ENCODE measurements at regions of chr7 and their contacts with region 1.

Region 1: DNA sequence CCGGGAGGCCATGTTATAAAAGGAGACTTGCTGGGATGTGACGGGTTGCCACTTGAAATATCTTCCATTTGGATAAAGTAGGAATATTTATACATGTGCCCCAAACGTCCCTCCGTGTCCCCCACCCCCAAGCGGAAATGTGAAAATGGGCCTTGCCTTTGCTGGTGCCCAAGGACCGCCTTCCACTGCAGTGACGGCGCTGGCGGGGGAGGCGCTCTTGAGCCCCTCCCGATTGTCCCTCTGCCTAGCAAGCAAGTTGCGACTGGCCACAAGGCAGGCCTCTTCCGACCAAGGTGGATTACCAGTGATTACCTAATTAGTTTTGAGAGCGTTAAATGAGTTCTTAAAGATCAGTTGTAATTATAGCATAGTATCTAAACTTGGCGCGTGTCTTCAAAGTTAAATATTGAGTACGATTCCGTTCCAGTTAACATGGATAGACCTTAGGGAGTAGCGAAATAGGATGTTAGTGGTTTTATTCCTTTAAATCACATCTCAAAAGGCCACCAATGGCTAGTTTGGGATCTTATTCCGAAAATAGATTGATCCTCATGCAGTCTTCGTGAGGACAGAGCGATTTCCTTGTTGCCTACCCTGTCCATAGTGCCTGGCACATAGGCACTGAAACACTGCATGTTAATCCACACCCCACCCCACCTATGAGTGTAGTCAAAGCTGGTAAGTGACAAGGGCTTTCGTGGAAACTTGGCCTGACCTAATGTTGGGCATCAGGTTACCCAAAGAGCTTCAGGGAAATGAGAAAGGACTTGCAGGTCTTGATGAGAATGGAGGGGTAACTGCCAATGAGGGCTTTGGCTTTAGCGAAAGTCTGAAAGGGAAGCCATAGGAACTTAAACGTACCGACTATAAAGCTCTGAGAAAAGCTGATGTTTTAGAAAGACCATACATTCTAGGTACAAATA is 1.1 kb downstream of the PPIA start:
- DNase-seq: peak; percentile 91
- ATAC-seq: peak; percentile 58
- H3K4me3 Mint-ChIP-seq: peak overlapping the region; percentile 100
- H3K27ac Mint-ChIP-seq: peak overlapping the region; percentile 99
- H3K4me1 Mint-ChIP-seq: peaks cover 41% of the 10 kb centered on the region
- H3K27me3 Mint-ChIP-seq: no peaks in the 10 kb centered on the region

Region 2: DNA sequence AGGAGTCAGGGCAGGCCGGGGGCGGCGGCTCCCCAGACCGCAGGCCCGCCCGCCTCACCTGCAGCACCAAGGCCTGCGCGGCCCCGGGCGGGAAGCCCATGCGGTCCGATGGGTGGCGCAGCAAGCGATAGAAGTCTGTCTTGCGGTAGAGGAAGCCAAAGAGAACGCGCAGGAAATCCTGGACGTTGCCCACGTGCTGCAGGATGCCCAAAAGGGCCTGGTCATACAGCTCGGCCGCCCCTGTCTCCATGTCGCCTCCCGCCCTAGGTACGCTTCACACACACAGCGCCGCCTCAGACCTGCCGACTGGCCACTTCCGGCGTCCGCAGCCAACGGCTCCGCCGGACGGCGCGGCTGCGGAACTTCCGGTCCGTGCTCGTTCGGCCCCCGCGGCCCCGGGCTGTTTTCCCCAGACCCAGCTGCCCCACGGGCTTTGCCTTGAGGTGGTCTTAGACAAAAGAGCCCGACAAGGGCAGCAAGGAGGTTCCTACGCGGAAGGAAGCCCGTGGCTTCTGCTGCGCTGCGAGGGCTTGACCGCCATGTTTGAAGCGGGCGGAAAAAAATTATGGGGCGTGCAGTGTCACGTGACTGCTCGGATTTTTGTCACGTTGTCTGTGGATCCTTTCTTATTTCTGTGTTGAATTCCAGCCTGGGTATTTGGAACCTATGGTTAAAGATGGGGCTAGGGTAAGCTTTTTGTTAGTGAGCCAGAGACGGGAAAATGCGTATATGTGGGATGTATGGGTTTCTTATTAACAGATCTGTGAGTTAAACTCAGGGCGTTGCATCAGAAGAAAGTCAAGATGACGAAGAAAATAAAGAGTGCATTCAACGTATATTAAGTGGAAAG is 307.0 kb before region 1 on chr7 and contains the start of gene NUDCD3:
- CTCF ChIA-PET with region 1: no interaction called
- POLR2A ChIA-PET with region 1: no interaction called
- intact Hi-C with region 1: loop called in 1 of 2 experiments (anchors 1 kb)
- DNase-seq: peak; percentile 88
- ATAC-seq: peak; percentile 74
- H3K4me3 Mint-ChIP-seq: peak within 1 kb of the TSS; percentile 86
- H3K27ac Mint-ChIP-seq: peak within 1 kb of the TSS; percentile 100
- H3K4me1 Mint-ChIP-seq: peaks cover 42% of the 10 kb centered on the region
- H3K27me3 Mint-ChIP-seq: peaks cover 3% of the 10 kb centered on the region
- total RNA-seq, gene NUDCD3: 70.3 to 77.6 TPM

Region 3: GRCh38 chr7:44606450-44607254 is 190.9 kb before region 1 on chr7 and contains the start of gene OGDH:
- CTCF ChIA-PET with region 1: interaction called, 6 read pairs
- POLR2A ChIA-PET with region 1: interaction called, 7 read pairs
- intact Hi-C with region 1: loop called (anchors 1 kb)
- DNase-seq: peak; percentile 100
- ATAC-seq: peak; percentile 98
- H3K4me3 Mint-ChIP-seq: peak within 1 kb of the TSS; percentile 92
- H3K27ac Mint-ChIP-seq: peak within 1 kb of the TSS; percentile 97
- H3K4me1 Mint-ChIP-seq: peaks cover 33% of the 10 kb centered on the region
- H3K27me3 Mint-ChIP-seq: no peaks in the 10 kb centered on the region
- total RNA-seq, gene OGDH: 80.3 to 90.1 TPM

Region 4: GRCh38 chr7:44748045-44748947 is 49.3 kb before region 1 on chr7 and contains the start of gene ZMIZ2:
- CTCF ChIA-PET with region 1: no interaction called
- POLR2A ChIA-PET with region 1: interaction called, 8 read pairs
- intact Hi-C with region 1: loop called (anchors 1 kb)
- DNase-seq: peak; percentile 97
- ATAC-seq: peak; percentile 87
- H3K4me3 Mint-ChIP-seq: peak within 1 kb of the TSS; percentile 78
- H3K27ac Mint-ChIP-seq: peak within 1 kb of the TSS; percentile 97
- H3K4me1 Mint-ChIP-seq: peaks cover 31% of the 10 kb centered on the region
- H3K27me3 Mint-ChIP-seq: no peaks in the 10 kb centered on the region
- total RNA-seq, gene ZMIZ2: 82.8 to 106 TPM

Region 5: DNA sequence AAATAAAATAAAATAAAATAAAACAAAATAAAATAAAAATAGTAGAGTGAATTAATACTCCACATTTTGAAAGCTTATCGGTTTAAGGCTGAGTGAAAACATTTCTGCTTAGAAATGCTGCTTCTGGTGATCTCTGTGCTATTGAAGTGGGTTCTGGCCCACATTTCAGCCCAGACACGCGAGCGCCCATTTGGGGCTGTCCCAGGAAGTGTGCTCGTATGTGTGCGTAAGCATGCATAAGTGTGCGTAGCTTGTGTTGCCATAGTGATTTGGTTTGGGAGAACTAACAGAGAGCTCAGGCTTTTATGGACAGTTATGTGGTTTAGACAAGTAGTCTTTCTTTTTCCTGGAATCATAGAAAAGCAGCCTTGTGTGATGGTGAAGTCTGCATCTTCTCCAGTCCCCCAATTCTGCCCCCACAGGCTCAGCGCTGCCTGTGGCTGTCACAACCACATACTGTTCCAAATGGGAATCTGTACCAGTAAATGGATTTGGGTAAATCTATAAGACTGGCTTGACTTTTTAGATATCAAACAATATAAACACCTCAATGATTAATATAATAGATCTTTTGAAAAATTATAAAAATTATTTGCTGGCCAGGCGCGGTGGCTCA is 117.5 kb after region 1 on chr7:
- CTCF ChIA-PET with region 1: interaction called, 4 read pairs
- POLR2A ChIA-PET with region 1: interaction called, 3 read pairs
- intact Hi-C with region 1: loop called (anchors 2 to 5 kb)
- DNase-seq: peak; percentile 87
- ATAC-seq: peak; percentile 99
- H3K4me3 Mint-ChIP-seq: peak overlapping the region; percentile 3
- H3K27ac Mint-ChIP-seq: peak overlapping the region; percentile 73
- H3K4me1 Mint-ChIP-seq: peaks cover 23% of the 10 kb centered on the region
- H3K27me3 Mint-ChIP-seq: no peaks in the 10 kb centered on the region

Region 6: GRCh38 chr7:44986218-44987053 is 188.8 kb after region 1 on chr7:
- CTCF ChIA-PET with region 1: no interaction called
- POLR2A ChIA-PET with region 1: interaction called, 3 read pairs
- intact Hi-C with region 1: loop called (anchors 2 to 5 kb)
- DNase-seq: peak; percentile 99
- ATAC-seq: peak; percentile 90
- H3K4me3 Mint-ChIP-seq: peak overlapping the region; percentile 99
- H3K27ac Mint-ChIP-seq: peak overlapping the region; percentile 99
- H3K4me1 Mint-ChIP-seq: peaks cover 52% of the 10 kb centered on the region
- H3K27me3 Mint-ChIP-seq: no peaks in the 10 kb centered on the region

Region 7: GRCh38 chr7:45136106-45137060 is 338.8 kb after region 1 on chr7:
- CTCF ChIA-PET with region 1: no interaction called
- POLR2A ChIA-PET with region 1: interaction called, 7 read pairs
- intact Hi-C with region 1: loop called in 1 of 2 experiments (anchors 5 kb)
- DNase-seq: peak; percentile 82
- ATAC-seq: peak; percentile 91
- H3K4me3 Mint-ChIP-seq: no peak overlapping the region
- H3K27ac Mint-ChIP-seq: no peak overlapping the region
- H3K4me1 Mint-ChIP-seq: peaks cover 11% of the 10 kb centered on the region
- H3K27me3 Mint-ChIP-seq: no peaks in the 10 kb centered on the region

Measured in activated CD4-positive, alpha-beta T cell treated with anti-CD3 and anti-CD28 coated beads for 36 hours (primary cell).